ENCODE measurements at regions of chr9 and their contacts with region 1.

Region 1: GRCh38 chr9:114405294-114406034 is 17.7 kb upstream of the AKNA start:
- DNase-seq: peak; percentile 89
- ATAC-seq: peak; percentile 99
- H3K4me3 ChIP-seq: no peak overlapping the region
- H3K4me3 Mint-ChIP-seq: no peak overlapping the region
- H3K27ac ChIP-seq: no peak overlapping the region
- H3K27ac Mint-ChIP-seq: peak overlapping the region; percentile 8
- H3K4me1 ChIP-seq: peaks cover 8 to 9% of the 10 kb centered on the region in 2 donors
- H3K4me1 Mint-ChIP-seq: peaks cover 4% of the 10 kb centered on the region
- H3K27me3 ChIP-seq: no peaks in the 10 kb centered on the region
- H3K27me3 Mint-ChIP-seq: no peaks in the 10 kb centered on the region
- CTCF ChIP-seq: peak; percentile 87

Region 2: GRCh38 chr9:114385412-114386181 is 19.9 kb before region 1 on chr9:
- CTCF ChIA-PET with region 1: interaction called, 18 read pairs
- POLR2A ChIA-PET with region 1: interaction called, 12 read pairs
- intact Hi-C with region 1: no loop called
- DNase-seq: peak; percentile 92
- ATAC-seq: peak; percentile 83
- H3K4me3 ChIP-seq: peak overlapping the region; percentile 75 to 96 (median 89)
- H3K4me3 Mint-ChIP-seq: peak overlapping the region; percentile 97
- H3K27ac ChIP-seq: peak overlapping the region; percentile 87 to 93
- H3K27ac Mint-ChIP-seq: peak overlapping the region; percentile 93
- H3K4me1 ChIP-seq: peaks cover 65 to 81% of the 10 kb centered on the region in 2 donors
- H3K4me1 Mint-ChIP-seq: peaks cover 81% of the 10 kb centered on the region
- H3K27me3 ChIP-seq: no peaks in the 10 kb centered on the region
- H3K27me3 Mint-ChIP-seq: no peaks in the 10 kb centered on the region
- CTCF ChIP-seq: peak; percentile 8

Region 3: DNA sequence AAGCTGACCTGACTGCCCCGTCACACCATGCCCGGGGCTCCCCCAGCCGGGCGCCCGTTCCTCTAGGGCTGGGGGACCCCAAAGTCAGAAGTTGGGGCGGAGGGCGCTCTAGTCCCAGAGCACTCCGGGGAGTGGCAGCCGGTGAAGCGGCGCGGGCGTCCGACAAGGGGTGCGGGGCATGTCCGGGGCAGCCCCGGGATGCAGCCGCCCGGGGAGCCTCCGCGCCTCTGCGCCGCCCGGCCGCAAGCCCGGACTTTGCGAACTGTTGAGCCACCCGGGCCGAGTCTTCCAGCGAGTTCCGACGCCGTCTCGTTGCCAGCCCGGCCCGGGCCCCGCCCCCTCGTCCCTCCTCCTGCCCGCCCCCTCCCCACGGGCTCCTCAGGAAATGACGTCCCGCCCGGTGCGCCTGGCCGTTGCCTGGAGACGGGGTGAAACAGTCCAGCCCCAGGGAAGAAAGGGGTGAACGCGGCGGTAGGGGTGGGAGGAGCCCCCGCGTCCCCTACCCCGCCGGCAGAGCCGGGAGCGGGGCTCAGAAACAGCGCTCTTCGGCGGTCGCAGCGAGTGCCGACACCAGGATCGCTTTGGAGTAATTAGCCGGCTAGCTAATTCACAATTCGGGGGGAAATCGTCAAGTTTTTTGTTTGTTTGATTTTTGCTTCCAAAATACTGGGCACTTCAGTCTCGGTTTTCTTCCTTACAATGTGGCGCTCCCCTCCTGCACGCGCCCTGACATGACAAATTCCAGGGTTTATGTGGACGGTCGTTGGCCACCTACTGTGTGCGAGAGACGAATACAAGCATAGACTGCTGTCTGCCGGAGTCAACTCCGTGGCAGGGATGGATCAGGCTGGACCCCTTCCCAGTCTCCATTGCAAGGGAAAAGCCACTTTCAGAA is 100.0 kb after region 1 on chr9 and contains the start of gene WHRN:
- CTCF ChIA-PET with region 1: interaction called, 89 read pairs
- POLR2A ChIA-PET with region 1: no interaction called
- intact Hi-C with region 1: no loop called
- DNase-seq: peak; percentile 95
- ATAC-seq: peak; percentile 85
- H3K4me3 ChIP-seq: peak within 1 kb of the TSS; percentile 53 to 77 (median 65)
- H3K4me3 Mint-ChIP-seq: peak within 1 kb of the TSS; percentile 90
- H3K27ac ChIP-seq: peak within 1 kb of the TSS in 1 of 2 donors; percentile 62
- H3K27ac Mint-ChIP-seq: peak within 1 kb of the TSS; percentile 90
- H3K4me1 ChIP-seq: peaks cover 29 to 41% of the 10 kb centered on the region in 2 donors
- H3K4me1 Mint-ChIP-seq: peaks cover 43% of the 10 kb centered on the region
- H3K27me3 ChIP-seq: peaks cover 0 to 17% (median 9%) of the 10 kb centered on the region in 4 experiments
- H3K27me3 Mint-ChIP-seq: peaks cover 29% of the 10 kb centered on the region
- CTCF ChIP-seq: no peak
- total RNA-seq, gene WHRN: 95.7 and 96.6 TPM in 2 replicates

Region 4: DNA sequence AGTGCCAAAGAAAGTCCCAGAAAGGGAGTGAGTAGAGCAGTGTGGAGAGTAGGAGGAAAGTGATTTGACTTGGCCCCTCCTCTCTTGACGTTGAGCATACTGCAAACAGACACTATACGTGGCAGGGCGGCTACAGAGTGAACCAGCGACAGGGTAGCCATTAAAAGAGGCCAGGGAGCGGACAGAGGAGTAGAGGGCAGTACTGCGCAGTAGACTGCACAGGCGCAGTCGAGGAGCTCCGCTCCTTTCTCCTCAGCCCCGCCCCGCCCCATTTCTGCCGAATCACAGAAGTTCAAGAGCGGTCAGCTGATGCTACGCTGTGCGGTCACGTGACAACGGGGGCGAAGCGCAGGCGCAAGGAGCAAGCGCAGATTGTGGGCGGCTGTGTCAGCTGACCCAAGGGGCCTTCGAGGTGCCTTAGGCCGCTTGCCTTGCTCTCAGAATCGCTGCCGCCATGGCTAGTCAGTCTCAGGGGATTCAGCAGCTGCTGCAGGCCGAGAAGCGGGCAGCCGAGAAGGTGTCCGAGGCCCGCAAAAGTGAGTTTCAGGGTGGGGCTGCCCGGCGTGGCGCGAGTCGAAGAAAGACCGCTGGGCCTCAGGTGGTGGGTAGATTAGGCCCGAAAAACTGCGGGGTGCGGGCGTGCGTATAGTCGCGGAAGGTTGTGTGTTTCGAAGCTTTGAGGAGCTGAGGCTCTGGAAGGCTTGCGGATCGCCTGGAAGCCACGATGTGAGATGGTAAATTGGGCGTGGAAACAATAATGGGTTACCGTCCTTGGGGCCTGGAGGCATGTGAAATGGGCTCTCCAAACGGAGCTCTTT is 182.1 kb after region 1 on chr9 and contains the start of gene ATP6V1G1:
- CTCF ChIA-PET with region 1: interaction called, 31 read pairs
- POLR2A ChIA-PET with region 1: no interaction called
- intact Hi-C with region 1: no loop called
- DNase-seq: peak; percentile 99
- ATAC-seq: peak; percentile 93
- H3K4me3 ChIP-seq: peak within 1 kb of the TSS; percentile 80 to 99 (median 96)
- H3K4me3 Mint-ChIP-seq: peak within 1 kb of the TSS; percentile 98
- H3K27ac ChIP-seq: peak within 1 kb of the TSS; percentile 93
- H3K27ac Mint-ChIP-seq: peak within 1 kb of the TSS; percentile 98
- H3K4me1 ChIP-seq: peaks cover 39 to 50% of the 10 kb centered on the region in 2 donors
- H3K4me1 Mint-ChIP-seq: peaks cover 47% of the 10 kb centered on the region
- H3K27me3 ChIP-seq: no peaks in the 10 kb centered on the region
- H3K27me3 Mint-ChIP-seq: no peaks in the 10 kb centered on the region
- CTCF ChIP-seq: no peak
- total RNA-seq, gene ATP6V1G1: 83.1 and 86.8 TPM in 2 replicates

Region 5: DNA sequence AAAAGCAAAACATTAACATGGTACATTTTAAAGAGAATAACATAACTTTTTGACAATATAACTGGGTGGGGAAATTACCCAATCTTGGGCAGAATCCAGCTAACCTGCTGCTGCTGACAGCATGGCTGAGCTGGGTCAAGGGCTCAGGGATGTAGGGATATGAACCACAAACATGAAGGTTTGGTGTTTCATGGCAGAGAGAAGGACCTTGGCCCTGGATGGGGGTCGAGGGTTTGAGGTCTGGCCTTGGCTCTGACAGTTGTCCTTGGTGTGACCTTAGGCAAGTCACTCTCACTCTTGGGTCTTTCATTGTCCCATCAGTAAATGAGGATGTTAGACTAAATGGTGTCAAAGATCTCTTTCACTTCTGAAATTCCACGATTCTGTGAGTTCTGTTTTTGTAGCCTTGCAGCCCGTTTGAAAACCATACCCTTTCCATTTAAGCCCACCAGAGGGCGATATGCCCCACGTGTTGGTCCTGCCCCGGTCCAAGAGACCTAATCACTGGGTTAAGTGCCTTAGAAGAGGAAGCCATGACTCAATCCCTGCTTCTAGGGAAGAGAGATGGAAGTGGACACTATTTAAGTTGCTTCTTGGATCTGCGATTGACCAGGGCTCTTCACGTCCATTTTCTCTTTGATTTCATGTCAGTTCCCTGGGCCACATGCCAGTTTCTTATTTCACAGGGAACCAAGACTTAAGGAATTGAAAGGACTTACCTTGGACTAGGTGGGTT is 333.3 kb after region 1 on chr9:
- CTCF ChIA-PET with region 1: interaction called, 11 read pairs
- POLR2A ChIA-PET with region 1: no interaction called
- intact Hi-C with region 1: loop called (anchors 10 kb)
- DNase-seq: peak; percentile 88
- ATAC-seq: peak; percentile 92
- H3K4me3 ChIP-seq: no peak overlapping the region
- H3K4me3 Mint-ChIP-seq: no peak overlapping the region
- H3K27ac ChIP-seq: no peak overlapping the region
- H3K27ac Mint-ChIP-seq: no peak overlapping the region
- H3K4me1 ChIP-seq: peaks cover 7 to 8% of the 10 kb centered on the region in 2 donors
- H3K4me1 Mint-ChIP-seq: peaks cover 13% of the 10 kb centered on the region
- H3K27me3 ChIP-seq: peaks cover 0 to 3% (median 1%) of the 10 kb centered on the region in 4 experiments
- H3K27me3 Mint-ChIP-seq: peaks cover 5% of the 10 kb centered on the region
- CTCF ChIP-seq: peak; percentile 91